MCF 10A (cell line): ENCODE measurements at regions of chr19 and their contacts with region 1.

Region 1: DNA sequence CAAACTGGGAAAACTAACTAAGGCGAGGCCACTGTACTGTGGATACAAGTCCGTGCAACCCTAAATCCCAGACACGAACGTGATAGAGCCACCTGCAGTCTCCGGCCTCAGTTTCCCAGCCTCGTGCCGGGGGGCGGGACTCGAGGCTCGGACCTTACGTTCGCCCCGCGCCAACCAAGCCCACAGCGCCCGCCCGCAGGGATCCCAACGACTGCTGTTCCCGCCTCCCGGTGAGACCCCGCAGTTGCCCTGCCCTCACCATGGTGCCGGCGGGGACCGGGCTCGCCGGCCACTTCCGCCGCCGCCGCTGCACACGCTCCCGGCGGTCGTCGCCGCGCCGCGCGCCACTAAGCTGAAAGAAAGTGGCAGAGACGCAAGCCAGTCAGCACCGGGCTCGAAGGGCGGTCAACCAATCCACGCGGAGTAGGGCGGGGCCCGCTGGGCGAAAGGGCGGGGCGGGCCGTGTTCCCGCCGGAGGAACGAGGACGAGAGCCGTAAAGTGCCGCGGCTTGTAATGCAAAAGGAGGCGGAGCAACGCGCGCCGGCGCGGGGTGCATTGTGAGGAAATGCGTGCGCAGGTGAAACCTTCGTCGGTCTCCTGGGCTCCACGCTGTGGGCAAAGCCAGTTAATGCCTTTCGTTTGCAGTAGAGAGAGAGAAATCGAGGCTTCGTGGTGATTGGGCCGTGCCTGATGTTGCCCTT is at the start of gene LSM4:
- DNase-seq: peak; percentile 99
- H3K4me3 Mint-ChIP-seq: peak within 1 kb of the TSS; percentile 83
- H3K27ac Mint-ChIP-seq: peak within 1 kb of the TSS; percentile 91
- H3K4me1 Mint-ChIP-seq: peaks cover 33% of the 10 kb centered on the region
- H3K27me3 Mint-ChIP-seq: no peaks in the 10 kb centered on the region
- CTCF ChIP-seq: peak; percentile 38
- total RNA-seq, gene LSM4: 172 and 193 TPM in 2 replicates

Region 2: DNA sequence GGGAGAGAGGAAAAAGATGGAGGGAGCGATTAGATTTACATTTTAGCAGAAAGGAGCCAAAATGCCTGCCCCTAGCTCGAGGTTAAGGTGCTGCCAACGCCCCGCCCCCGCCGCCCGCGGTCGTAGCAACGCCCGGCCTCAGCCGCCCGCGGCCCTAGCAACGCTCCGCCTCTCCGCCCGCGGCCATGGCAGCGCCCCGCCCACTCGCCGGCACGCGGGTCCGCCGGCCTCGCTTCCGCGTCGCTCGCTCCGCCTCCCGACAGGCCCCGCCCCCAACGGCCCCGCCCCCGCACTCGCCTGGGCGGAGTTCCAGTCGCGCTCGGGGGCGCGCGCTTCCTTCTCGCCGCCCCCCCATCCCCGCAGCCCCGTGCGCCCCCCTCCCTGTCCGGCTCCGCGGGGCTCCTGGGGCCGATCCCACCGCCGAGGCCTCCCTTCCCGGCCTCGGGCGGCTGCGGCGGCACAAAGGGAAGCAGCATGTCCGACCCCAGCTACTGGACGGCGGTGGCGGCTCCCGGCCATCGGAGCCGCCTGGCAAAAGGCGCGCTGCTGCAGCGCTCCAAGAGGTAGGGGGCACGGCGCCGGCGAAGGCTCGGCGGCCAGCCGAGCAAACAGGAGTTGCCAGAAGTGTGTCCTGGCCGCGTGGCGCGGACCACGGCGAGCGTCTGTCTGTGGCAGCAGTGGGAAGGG is 205.1 kb before region 1 on chr19:
- CTCF ChIA-PET with region 1: interaction called, 3 read pairs
- POLR2A ChIA-PET with region 1: interaction called, 5 read pairs
- intact Hi-C with region 1: loop called (anchors 10 kb)
- DNase-seq: peak; percentile 70
- H3K4me3 Mint-ChIP-seq: peak overlapping the region; percentile 77
- H3K27ac Mint-ChIP-seq: peak overlapping the region; percentile 63
- H3K4me1 Mint-ChIP-seq: peaks cover 15% of the 10 kb centered on the region
- H3K27me3 Mint-ChIP-seq: no peaks in the 10 kb centered on the region
- CTCF ChIP-seq: no peak

Region 3: GRCh38 chr19:18274781-18275356 is 48.0 kb before region 1 on chr19:
- CTCF ChIA-PET with region 1: interaction called, 257 read pairs
- POLR2A ChIA-PET with region 1: interaction called, 178 read pairs
- intact Hi-C with region 1: loop called (anchors 1 kb)
- DNase-seq: peak; percentile 94
- H3K4me3 Mint-ChIP-seq: peak overlapping the region; percentile 38
- H3K27ac Mint-ChIP-seq: peak overlapping the region; percentile 79
- H3K4me1 Mint-ChIP-seq: peaks cover 23% of the 10 kb centered on the region
- H3K27me3 Mint-ChIP-seq: no peaks in the 10 kb centered on the region
- CTCF ChIP-seq: peak; percentile 3

Region 4: DNA sequence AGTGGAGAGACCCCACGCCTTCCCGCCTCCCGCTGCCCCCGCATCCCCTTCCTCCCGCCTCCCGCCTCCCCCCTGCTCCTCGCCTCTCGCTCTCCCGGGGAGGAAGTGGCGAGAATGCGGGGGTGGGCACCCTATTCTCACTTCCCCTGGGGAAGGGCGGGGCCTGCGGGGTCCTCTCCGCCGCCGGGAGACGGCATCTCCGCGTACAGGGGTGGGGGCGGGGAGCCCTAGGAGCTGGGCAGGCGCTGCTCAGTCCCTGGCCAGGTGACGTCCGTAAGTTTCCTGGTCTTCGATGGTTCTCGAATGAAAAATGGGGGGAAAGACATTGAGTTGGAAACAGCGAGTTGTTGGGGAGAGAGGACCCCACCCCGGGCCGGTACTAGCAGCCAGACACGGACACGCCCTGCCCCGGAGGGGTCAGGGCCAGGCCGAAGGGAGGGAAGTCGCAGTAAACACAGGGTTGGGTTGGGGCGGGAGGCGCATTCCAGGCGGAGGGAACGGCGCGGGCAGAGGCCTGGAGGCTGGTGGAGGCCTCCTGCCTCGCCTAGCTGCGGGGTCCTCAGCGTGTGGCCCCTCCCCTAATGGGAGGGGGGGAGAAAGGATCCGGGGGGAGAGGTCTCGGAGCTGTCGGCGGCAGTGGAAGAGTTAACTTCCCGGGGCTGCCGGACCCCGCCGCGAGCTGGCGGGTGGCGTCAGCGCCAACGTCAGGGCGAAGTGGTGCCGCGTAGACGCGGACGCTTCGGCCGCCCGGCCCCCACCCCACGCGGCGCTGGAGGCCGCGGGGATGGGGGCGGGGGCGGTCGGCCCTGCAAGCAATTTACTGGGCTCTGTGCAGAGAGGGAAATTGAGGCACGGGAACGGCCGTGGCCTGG is 31.1 kb before region 1 on chr19:
- CTCF ChIA-PET with region 1: interaction called, 15 read pairs
- POLR2A ChIA-PET with region 1: interaction called, 54 read pairs
- intact Hi-C with region 1: no loop called
- DNase-seq: peak; percentile 70
- H3K4me3 Mint-ChIP-seq: peak overlapping the region; percentile 78
- H3K27ac Mint-ChIP-seq: peak overlapping the region; percentile 97
- H3K4me1 Mint-ChIP-seq: peaks cover 19% of the 10 kb centered on the region
- H3K27me3 Mint-ChIP-seq: no peaks in the 10 kb centered on the region
- CTCF ChIP-seq: no peak

Region 5: GRCh38 chr19:18304458-18305310 is 18.2 kb before region 1 on chr19:
- CTCF ChIA-PET with region 1: interaction called, 5 read pairs
- POLR2A ChIA-PET with region 1: interaction called, 17 read pairs
- intact Hi-C with region 1: no loop called
- DNase-seq: no peak
- H3K4me3 Mint-ChIP-seq: peak overlapping the region; percentile 53
- H3K27ac Mint-ChIP-seq: peak overlapping the region; percentile 89
- H3K4me1 Mint-ChIP-seq: peaks cover 23% of the 10 kb centered on the region
- H3K27me3 Mint-ChIP-seq: no peaks in the 10 kb centered on the region
- CTCF ChIP-seq: no peak

Region 6: DNA sequence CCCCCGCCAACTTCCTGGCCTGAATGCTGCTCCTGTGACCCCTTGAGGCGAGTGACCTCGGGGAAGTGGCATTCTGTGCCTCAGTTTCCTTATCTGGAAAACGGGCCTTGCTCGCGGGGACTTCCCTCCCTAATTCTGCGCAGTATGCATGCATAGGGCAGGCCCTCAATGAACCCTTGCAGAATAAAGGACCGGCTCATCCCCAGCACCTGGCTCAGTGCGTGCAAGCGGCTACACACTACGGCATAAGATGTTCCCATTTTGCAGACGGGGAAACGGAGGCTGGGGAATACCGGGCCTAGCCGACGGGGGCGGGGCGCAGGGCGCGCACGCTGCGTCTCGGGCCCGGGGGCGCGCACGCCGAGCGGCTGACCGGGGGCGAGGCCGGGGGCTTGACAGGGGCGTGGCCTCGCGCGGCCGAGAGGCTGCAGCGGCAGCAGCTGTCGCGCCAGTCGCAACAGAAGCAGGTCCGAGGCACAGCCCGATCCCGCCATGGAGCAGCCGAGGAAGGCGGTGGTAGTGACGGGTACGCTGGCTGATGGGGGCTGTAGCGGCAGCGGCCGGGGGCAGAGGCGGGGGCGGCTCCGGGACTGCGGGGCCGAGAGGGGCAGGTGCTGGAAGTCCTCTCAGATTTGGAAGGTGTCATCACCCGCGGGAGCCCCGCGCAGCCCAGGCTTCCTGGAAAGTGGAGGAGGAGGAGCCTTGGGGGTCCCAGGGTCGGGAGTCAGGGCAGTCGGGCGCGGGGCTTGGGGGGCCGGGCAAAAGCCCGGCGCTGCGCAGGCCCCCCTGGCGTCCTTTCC is 17.5 kb after region 1 on chr19 and contains the start of gene PGPEP1:
- CTCF ChIA-PET with region 1: interaction called, 26 read pairs
- POLR2A ChIA-PET with region 1: interaction called, 15 read pairs
- intact Hi-C with region 1: no loop called
- DNase-seq: no peak
- H3K4me3 Mint-ChIP-seq: peak within 1 kb of the TSS; percentile 58
- H3K27ac Mint-ChIP-seq: no peak within 1 kb of the TSS
- H3K4me1 Mint-ChIP-seq: peaks cover 11% of the 10 kb centered on the region
- H3K27me3 Mint-ChIP-seq: no peaks in the 10 kb centered on the region
- CTCF ChIP-seq: no peak
- total RNA-seq, gene PGPEP1: 6.5 and 11.9 TPM in 2 replicates

Region 7: GRCh38 chr19:18379803-18380747 is 57.2 kb after region 1 on chr19:
- CTCF ChIA-PET with region 1: no interaction called
- POLR2A ChIA-PET with region 1: no interaction called
- intact Hi-C with region 1: no loop called
- DNase-seq: peak; percentile 60
- H3K4me3 Mint-ChIP-seq: no peak overlapping the region
- H3K27ac Mint-ChIP-seq: no peak overlapping the region
- H3K4me1 Mint-ChIP-seq: peaks cover 10% of the 10 kb centered on the region
- H3K27me3 Mint-ChIP-seq: no peaks in the 10 kb centered on the region
- CTCF ChIP-seq: no peak